Dendritic cell treated with granulocyte-macrophage colony-stimulating factor and Interleukin-4, amounts not matched to agents 40 ng/mL and 50 ng/mL, for 4 days (primary cell): ENCODE measurements at regions of chr15 and their contacts with region 1.

Region 1: DNA sequence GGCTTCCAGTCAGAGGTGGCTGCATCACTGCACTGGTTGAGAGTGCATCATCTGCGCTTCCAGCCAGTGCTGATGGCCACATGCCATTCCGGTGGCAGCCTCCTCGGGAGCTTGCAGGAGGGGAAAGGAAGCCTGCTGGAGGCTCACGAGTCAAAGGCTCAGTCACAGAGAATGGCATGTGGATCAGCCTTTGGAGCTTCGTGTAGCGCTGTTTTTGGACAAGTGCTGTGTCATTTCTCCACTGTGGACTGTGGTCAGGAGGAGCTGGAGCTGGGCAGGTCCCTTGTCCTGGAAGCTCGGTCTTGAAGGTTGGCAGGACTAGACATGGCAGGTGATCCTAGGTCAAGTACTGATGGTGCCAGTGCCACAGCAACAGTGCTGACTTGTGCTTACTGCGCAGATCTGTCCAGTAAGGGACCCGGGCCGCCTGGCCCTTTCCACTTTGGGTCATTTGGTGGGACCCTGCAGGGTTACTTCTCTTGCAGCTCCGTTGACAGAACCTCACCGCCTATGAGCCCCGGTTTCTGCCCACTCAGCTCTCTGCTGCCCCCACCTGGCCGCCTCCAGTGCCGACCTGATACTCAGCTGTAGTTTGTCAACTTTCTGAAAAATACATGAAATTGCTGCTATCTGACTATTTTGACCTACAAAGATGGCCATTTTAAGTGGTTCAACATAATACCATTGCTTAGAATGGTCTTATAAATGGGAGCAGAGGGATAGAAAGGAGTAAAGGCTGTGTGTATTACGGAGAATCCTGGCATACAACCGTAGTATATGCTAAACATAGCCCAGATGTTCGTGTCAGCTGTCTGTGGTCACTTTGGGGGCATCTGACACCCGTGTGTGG is 27.6 kb upstream of the TRPM1 start:
- H3K4me3 Mint-ChIP-seq: no peak overlapping the region
- H3K27ac Mint-ChIP-seq: no peak overlapping the region
- H3K4me1 Mint-ChIP-seq: no peaks in the 10 kb centered on the region
- H3K27me3 Mint-ChIP-seq: peaks cover 3% of the 10 kb centered on the region

Region 2: GRCh38 chr15:30962079-30962478 is 167.1 kb before region 1 on chr15:
- intact Hi-C with region 1: loop called (anchors 5 kb)
- H3K4me3 Mint-ChIP-seq: no peak overlapping the region
- H3K27ac Mint-ChIP-seq: peak overlapping the region; percentile 55
- H3K4me1 Mint-ChIP-seq: peaks cover 57% of the 10 kb centered on the region
- H3K27me3 Mint-ChIP-seq: no peaks in the 10 kb centered on the region

Region 3: DNA sequence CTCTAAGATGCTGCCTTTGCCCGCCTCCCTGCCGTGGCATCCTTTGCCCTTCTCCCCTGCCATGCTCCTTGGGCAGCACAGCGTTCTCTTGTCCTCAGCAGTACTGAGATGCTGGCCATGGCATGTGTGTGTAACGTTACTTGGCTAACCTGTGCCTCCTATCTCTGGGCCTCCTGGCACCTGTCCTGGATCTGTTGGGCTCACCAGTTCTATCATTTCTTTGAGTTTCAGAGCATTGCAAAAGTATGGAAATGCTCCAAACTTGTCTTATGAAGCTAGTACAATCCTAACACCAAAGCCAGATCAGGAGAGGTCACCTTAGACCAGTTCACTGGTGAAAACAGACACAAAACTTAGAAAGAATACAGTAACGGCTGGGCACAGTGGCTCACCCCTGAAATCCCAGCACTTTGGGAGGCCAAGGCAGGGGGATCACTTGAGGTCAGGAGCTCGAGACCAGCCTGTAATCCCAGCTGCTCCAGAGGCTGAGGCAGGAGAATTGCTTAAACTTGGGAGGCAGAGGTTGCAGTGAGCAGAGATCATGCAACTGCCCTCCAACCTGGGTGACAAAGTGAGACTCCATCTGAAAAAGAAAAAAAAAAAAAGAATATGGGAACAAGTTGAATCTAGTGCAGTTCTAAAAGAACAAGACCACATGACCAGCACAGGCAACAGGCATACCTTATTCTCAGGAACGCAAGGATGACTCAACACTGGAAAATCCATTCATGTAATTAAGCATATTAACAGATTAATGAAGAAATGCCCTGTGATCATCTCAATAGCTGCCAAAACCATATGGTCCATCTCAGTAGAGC is 34.8 kb after region 1 on chr15:
- intact Hi-C with region 1: no loop called
- H3K4me3 Mint-ChIP-seq: no peak overlapping the region
- H3K27ac Mint-ChIP-seq: no peak overlapping the region
- H3K4me1 Mint-ChIP-seq: no peaks in the 10 kb centered on the region
- H3K27me3 Mint-ChIP-seq: peaks cover 16% of the 10 kb centered on the region